CD8-positive, alpha-beta T cell (primary cell): ENCODE measurements at regions of chr12 and their contacts with region 1.

Region 1: DNA sequence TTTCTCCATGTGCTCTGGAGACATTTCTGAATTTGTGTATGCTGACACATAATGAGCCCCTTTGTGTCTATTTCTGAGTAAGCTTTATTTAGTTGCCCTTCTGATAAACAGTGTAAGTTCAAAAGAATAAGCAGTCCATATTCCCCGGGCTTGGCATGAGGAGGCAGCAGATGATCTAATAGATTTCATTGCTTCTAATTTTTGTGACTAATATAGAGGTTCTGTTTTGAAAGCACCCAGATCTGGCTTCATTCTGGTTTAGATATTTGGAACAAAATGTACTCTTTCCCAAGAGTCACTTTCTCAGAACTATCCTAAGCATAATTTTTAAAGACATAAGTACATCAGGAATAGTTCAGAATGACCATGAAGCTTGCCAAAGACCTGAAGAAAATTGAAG is 290.9 kb downstream of the BTG1 start:
- DNase-seq: no peak
- ATAC-seq: no peak
- H3K4me3 ChIP-seq: no peak overlapping the region
- H3K4me3 Mint-ChIP-seq: no peak overlapping the region
- H3K27ac ChIP-seq: no peak overlapping the region
- H3K27ac Mint-ChIP-seq: no peak overlapping the region
- H3K4me1 ChIP-seq: peaks cover 6% of the 10 kb centered on the region
- H3K4me1 Mint-ChIP-seq: peaks cover 28% of the 10 kb centered on the region
- H3K27me3 ChIP-seq: no peaks in the 10 kb centered on the region
- H3K27me3 Mint-ChIP-seq: no peaks in the 10 kb centered on the region
- CTCF ChIP-seq: no peak

Region 2: GRCh38 chr12:91866566-91866965 is 11.8 kb after region 1 on chr12:
- CTCF ChIA-PET with region 1: interaction called, 3 read pairs
- POLR2A ChIA-PET with region 1: interaction called, 5 read pairs
- intact Hi-C with region 1: loop called in 1 of 2 experiments (anchors 1 kb)
- DNase-seq: no peak
- ATAC-seq: no peak
- H3K4me3 ChIP-seq: no peak overlapping the region
- H3K4me3 Mint-ChIP-seq: no peak overlapping the region
- H3K27ac ChIP-seq: no peak overlapping the region
- H3K27ac Mint-ChIP-seq: no peak overlapping the region
- H3K4me1 ChIP-seq: peaks cover 33% of the 10 kb centered on the region
- H3K4me1 Mint-ChIP-seq: peaks cover 54% of the 10 kb centered on the region
- H3K27me3 ChIP-seq: no peaks in the 10 kb centered on the region
- H3K27me3 Mint-ChIP-seq: no peaks in the 10 kb centered on the region
- CTCF ChIP-seq: no peak

Region 3: GRCh38 chr12:91871751-91872150 is 17.0 kb after region 1 on chr12:
- CTCF ChIA-PET with region 1: interaction called, 3 read pairs
- POLR2A ChIA-PET with region 1: interaction called, 5 read pairs
- intact Hi-C with region 1: loop called in 1 of 2 experiments (anchors 2 kb)
- DNase-seq: no peak
- ATAC-seq: no peak
- H3K4me3 ChIP-seq: no peak overlapping the region
- H3K4me3 Mint-ChIP-seq: peak overlapping the region; percentile 41
- H3K27ac ChIP-seq: peak overlapping the region in 1 of 2 experiments; percentile 23
- H3K27ac Mint-ChIP-seq: peak overlapping the region; percentile 94
- H3K4me1 ChIP-seq: peaks cover 64% of the 10 kb centered on the region
- H3K4me1 Mint-ChIP-seq: peaks cover 63% of the 10 kb centered on the region
- H3K27me3 ChIP-seq: no peaks in the 10 kb centered on the region
- H3K27me3 Mint-ChIP-seq: no peaks in the 10 kb centered on the region
- CTCF ChIP-seq: no peak

Region 4: DNA sequence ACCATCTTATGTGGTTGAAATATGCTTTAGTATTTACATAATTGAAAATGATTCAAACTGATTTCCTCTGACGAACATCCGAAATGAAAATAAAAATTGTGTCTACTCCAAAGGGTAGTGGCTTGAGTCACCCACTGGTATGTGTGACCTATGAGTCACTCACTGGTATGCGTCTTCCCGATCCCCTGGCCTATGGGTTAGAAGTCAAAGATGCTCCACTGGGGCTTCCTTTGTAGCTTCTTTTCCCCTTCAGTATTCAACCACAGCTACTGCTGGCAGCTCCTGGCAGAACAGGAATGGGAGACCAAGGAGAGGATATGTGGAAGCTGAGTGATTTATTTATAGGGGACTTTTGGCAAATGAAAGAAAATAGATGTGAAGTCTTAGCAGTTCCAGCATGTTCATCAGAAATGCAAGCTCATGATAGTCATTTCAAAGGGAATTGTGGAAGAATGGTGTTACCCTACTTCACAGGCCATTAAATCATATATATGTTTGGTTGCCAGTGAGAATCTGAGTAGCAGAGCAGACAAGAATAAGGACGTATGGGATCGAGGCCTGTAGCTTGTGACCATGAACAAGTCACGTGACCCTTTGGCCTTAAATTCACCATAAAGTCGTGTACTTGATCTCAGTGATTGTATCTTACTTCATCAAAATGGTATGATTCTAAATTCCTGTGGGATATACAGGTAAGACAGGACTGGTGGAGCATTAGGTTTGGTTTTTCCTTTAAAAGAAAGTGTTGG is 1930.7 kb after region 1 on chr12:
- CTCF ChIA-PET with region 1: no interaction called
- POLR2A ChIA-PET with region 1: no interaction called
- intact Hi-C with region 1: loop called in 1 of 2 experiments (anchors 5 kb)
- DNase-seq: peak in 6 of 9 experiments; percentile 12 to 61 (median 48)
- ATAC-seq: peak; percentile 52
- H3K4me3 ChIP-seq: no peak overlapping the region
- H3K4me3 Mint-ChIP-seq: no peak overlapping the region
- H3K27ac ChIP-seq: no peak overlapping the region
- H3K27ac Mint-ChIP-seq: peak overlapping the region; percentile 42
- H3K4me1 ChIP-seq: peaks cover 33% of the 10 kb centered on the region
- H3K4me1 Mint-ChIP-seq: peaks cover 57% of the 10 kb centered on the region
- H3K27me3 ChIP-seq: no peaks in the 10 kb centered on the region
- H3K27me3 Mint-ChIP-seq: no peaks in the 10 kb centered on the region
- CTCF ChIP-seq: no peak